CD4-positive, alpha-beta memory T cell (primary cell): ENCODE measurements at regions of chr2 and their contacts with region 1.

Region 1: DNA sequence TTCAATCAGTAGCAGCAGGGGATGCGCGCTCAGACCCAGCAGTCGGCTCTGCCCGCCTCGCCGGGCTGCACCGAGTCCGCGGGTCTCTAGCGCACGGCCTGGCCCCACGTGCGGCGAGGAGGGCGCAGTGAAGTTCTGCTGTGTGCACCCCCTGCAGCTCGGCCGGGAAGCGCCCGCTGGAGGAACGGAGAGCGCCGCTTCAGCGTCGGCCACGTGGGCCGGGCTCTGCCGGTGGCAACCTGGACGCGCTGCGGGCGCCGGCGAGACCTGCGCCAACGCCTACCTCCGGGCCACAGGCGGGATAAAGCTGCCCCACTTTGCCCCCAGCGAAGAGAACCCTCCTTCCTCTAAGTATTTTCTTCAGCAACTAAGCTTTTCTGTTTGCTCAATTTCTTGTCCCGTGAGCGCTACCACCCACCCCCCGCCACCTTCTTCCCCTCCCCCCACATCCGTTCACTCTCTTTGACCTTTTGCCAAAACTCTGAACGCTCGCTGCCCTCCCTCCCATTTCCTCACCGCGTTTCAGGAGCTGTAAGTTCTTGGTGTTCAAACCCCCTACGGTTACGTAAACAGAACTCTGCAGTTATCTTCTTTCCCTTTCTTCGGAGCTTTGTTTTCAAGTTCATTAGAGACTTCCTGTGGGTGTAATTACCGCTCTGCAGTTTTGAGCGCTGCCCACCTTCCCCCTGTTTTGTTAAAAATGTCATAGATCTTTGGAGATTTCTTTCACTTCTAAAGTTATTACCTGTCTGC is 42.6 kb upstream of the EDAR start:
- DNase-seq: peak; percentile 86 to 92 (median 92)
- H3K4me3 ChIP-seq: peak overlapping the region; percentile 14 to 61
- H3K4me3 Mint-ChIP-seq: peak overlapping the region; percentile 74 to 87 (median 86)
- H3K27ac ChIP-seq: peak overlapping the region; percentile 49
- H3K27ac Mint-ChIP-seq: peak overlapping the region; percentile 85 to 95 (median 93)
- H3K4me1 ChIP-seq: peaks cover 71% of the 10 kb centered on the region
- H3K4me1 Mint-ChIP-seq: peaks cover 37 to 81% (median 60%) of the 10 kb centered on the region in 4 donors
- H3K27me3 ChIP-seq: no peaks in the 10 kb centered on the region
- H3K27me3 Mint-ChIP-seq: no peaks in the 10 kb centered on the region

Region 2: GRCh38 chr2:108448678-108449493 is 582.8 kb before region 1 on chr2 and contains the start of gene GCC2:
- CTCF ChIA-PET with region 1: no interaction called
- POLR2A ChIA-PET with region 1: no interaction called
- intact Hi-C with region 1: loop called (anchors 5 kb)
- DNase-seq: peak; percentile 96 to 97 (median 96)
- H3K4me3 ChIP-seq: peak within 1 kb of the TSS; percentile 83 to 100
- H3K4me3 Mint-ChIP-seq: peak within 1 kb of the TSS; percentile 95 to 100 (median 98)
- H3K27ac ChIP-seq: peak within 1 kb of the TSS; percentile 97
- H3K27ac Mint-ChIP-seq: peak within 1 kb of the TSS; percentile 98 to 100 (median 99)
- H3K4me1 ChIP-seq: peaks cover 32% of the 10 kb centered on the region
- H3K4me1 Mint-ChIP-seq: peaks cover 20 to 50% (median 34%) of the 10 kb centered on the region in 4 donors
- H3K27me3 ChIP-seq: no peaks in the 10 kb centered on the region
- H3K27me3 Mint-ChIP-seq: no peaks in the 10 kb centered on the region
- total RNA-seq, gene GCC2: 209 to 232 TPM

Region 3: GRCh38 chr2:108565778-108566375 is 465.8 kb before region 1 on chr2:
- CTCF ChIA-PET with region 1: no interaction called
- POLR2A ChIA-PET with region 1: no interaction called
- intact Hi-C with region 1: no loop called
- DNase-seq: no peak
- H3K4me3 ChIP-seq: no peak overlapping the region
- H3K4me3 Mint-ChIP-seq: peak overlapping the region; percentile 17 to 71 (median 52)
- H3K27ac ChIP-seq: peak overlapping the region; percentile 5
- H3K27ac Mint-ChIP-seq: peak overlapping the region in 6 of 7 donors; percentile 61 to 92 (median 76)
- H3K4me1 ChIP-seq: no peaks in the 10 kb centered on the region
- H3K4me1 Mint-ChIP-seq: peaks cover 7 to 18% (median 9%) of the 10 kb centered on the region in 4 donors
- H3K27me3 ChIP-seq: no peaks in the 10 kb centered on the region
- H3K27me3 Mint-ChIP-seq: no peaks in the 10 kb centered on the region

Region 4: GRCh38 chr2:108855194-108855593 is 176.5 kb before region 1 on chr2:
- CTCF ChIA-PET with region 1: interaction called, 3 read pairs
- POLR2A ChIA-PET with region 1: no interaction called
- intact Hi-C with region 1: loop called (anchors 5 kb)
- DNase-seq: peak in 4 of 5 donors; percentile 26 to 38 (median 34)
- H3K4me3 ChIP-seq: no peak overlapping the region
- H3K4me3 Mint-ChIP-seq: no peak overlapping the region
- H3K27ac ChIP-seq: no peak overlapping the region
- H3K27ac Mint-ChIP-seq: peak overlapping the region in 1 of 7 donors; percentile 13
- H3K4me1 ChIP-seq: no peaks in the 10 kb centered on the region
- H3K4me1 Mint-ChIP-seq: peaks cover 0 to 2% (median 0%) of the 10 kb centered on the region in 4 donors
- H3K27me3 ChIP-seq: no peaks in the 10 kb centered on the region
- H3K27me3 Mint-ChIP-seq: no peaks in the 10 kb centered on the region

Region 5: GRCh38 chr2:108988796-108989713 is 42.6 kb before region 1 on chr2 and contains the start of gene EDAR:
- CTCF ChIA-PET with region 1: interaction called, 5 read pairs
- POLR2A ChIA-PET with region 1: interaction called, 25 read pairs
- intact Hi-C with region 1: loop called (anchors 1 kb)
- DNase-seq: peak in 4 of 5 donors; percentile 42 to 55 (median 48)
- H3K4me3 ChIP-seq: peak within 1 kb of the TSS; percentile 19 to 26
- H3K4me3 Mint-ChIP-seq: peak within 1 kb of the TSS; percentile 85 to 95 (median 88)
- H3K27ac ChIP-seq: no peak within 1 kb of the TSS
- H3K27ac Mint-ChIP-seq: peak within 1 kb of the TSS; percentile 16 to 90 (median 77)
- H3K4me1 ChIP-seq: peaks cover 29% of the 10 kb centered on the region
- H3K4me1 Mint-ChIP-seq: peaks cover 21 to 43% (median 33%) of the 10 kb centered on the region in 4 donors
- H3K27me3 ChIP-seq: no peaks in the 10 kb centered on the region
- H3K27me3 Mint-ChIP-seq: peaks cover 0 to 7% of the 10 kb centered on the region in 2 donors
- total RNA-seq, gene EDAR: 5.8 to 6.3 TPM

Region 6: GRCh38 chr2:109046925-109047508 is 15.4 kb after region 1 on chr2:
- CTCF ChIA-PET with region 1: interaction called, 3 read pairs
- POLR2A ChIA-PET with region 1: interaction called, 6 read pairs
- intact Hi-C with region 1: loop called (anchors 2 kb)
- DNase-seq: no peak
- H3K4me3 ChIP-seq: no peak overlapping the region
- H3K4me3 Mint-ChIP-seq: no peak overlapping the region
- H3K27ac ChIP-seq: no peak overlapping the region
- H3K27ac Mint-ChIP-seq: peak overlapping the region in 3 of 7 donors; percentile 25 to 78 (median 55)
- H3K4me1 ChIP-seq: no peaks in the 10 kb centered on the region
- H3K4me1 Mint-ChIP-seq: peaks cover 3 to 13% (median 7%) of the 10 kb centered on the region in 4 donors
- H3K27me3 ChIP-seq: no peaks in the 10 kb centered on the region
- H3K27me3 Mint-ChIP-seq: no peaks in the 10 kb centered on the region

Region 7: GRCh38 chr2:109102588-109103233 is 71.1 kb after region 1 on chr2:
- CTCF ChIA-PET with region 1: interaction called, 3 read pairs
- POLR2A ChIA-PET with region 1: interaction called, 8 read pairs
- intact Hi-C with region 1: loop called (anchors 5 kb)
- DNase-seq: peak in 2 of 5 donors; percentile 10 to 12
- H3K4me3 ChIP-seq: no peak overlapping the region
- H3K4me3 Mint-ChIP-seq: peak overlapping the region in 4 of 8 donors; percentile 1 to 66 (median 7)
- H3K27ac ChIP-seq: no peak overlapping the region
- H3K27ac Mint-ChIP-seq: no peak overlapping the region
- H3K4me1 ChIP-seq: peaks cover 9% of the 10 kb centered on the region
- H3K4me1 Mint-ChIP-seq: peaks cover 10 to 18% (median 12%) of the 10 kb centered on the region in 4 donors
- H3K27me3 ChIP-seq: no peaks in the 10 kb centered on the region
- H3K27me3 Mint-ChIP-seq: peaks cover 1 to 4% of the 10 kb centered on the region in 2 donors

Region 8: DNA sequence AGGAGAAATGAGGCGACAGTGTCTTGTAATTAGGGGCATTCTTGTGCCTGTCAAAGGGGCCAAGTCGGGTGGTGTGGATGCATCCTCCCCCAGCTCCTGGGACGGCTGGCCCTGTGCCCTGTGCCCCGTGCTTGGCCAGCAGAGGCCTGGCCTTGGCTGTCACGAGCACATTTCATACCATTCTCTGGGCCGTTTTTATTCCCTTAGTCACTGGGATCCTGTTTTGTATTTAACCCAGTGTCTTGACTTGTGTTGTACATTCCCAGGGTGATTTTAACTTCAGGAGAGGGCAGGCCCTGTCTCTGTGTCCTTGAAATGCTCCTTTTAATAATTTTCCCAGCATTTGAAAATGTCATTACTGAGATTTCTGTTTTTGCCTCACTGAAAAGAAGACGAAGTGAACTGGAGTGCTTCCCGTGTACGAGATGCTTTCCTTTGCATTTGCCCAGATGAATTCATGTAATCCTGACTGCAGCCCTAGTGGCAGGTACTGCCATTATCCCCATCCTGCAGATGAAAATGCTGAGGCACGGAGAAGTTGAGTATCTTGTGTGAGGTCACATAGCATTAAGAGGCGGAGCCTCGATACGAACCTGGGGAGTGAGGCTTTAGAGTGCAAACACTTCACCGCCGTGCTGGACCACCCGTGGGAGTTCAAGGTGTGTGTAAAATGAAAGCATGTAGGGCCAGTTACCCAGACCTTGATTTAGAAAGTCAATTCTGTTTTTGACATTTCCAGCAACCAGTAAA is 154.3 kb after region 1 on chr2:
- CTCF ChIA-PET with region 1: no interaction called
- POLR2A ChIA-PET with region 1: no interaction called
- intact Hi-C with region 1: no loop called
- DNase-seq: no peak
- H3K4me3 ChIP-seq: no peak overlapping the region
- H3K4me3 Mint-ChIP-seq: no peak overlapping the region
- H3K27ac ChIP-seq: no peak overlapping the region
- H3K27ac Mint-ChIP-seq: no peak overlapping the region
- H3K4me1 ChIP-seq: no peaks in the 10 kb centered on the region
- H3K4me1 Mint-ChIP-seq: no peaks in the 10 kb centered on the region
- H3K27me3 ChIP-seq: peaks cover under 1% of the 10 kb centered on the region
- H3K27me3 Mint-ChIP-seq: peaks cover 10 to 13% of the 10 kb centered on the region in 2 donors

Region 9: DNA sequence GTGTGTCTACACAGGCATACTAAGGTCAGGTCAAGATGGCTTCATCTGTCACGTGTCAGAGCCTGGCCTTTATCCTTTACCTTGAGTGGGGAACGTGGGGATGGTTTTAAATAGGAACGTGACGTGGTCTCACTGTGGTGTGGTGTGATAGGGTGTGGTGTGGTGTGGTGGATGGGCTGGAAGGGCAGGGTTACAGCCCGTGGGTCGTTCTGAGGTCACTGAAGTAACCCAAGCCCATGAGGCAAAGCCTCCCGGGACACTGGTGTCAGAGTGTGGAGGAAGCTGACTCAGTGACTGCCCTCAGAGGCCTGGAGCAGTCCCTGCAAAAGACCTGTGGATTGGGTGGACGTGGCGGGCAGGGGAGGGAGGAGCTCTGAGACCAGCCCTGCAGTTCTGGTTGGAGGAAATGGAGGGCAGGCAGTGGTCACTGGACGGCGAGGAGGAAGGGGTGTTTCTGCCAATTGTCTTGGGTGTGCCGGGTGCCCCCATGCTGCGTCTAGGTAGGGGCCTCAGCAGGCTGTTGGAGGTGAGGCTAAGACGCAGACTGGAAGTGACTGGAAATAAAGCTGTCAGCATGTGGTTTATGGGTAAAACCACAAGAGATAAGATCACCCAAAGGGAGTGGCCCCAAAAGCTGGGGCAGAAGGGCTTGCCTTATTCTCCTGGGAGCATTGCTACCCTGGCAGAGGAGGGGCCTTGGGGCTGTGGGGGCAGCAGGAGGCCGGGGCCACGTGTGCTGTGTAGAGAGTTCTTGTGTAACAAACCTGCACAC is 182.2 kb after region 1 on chr2:
- CTCF ChIA-PET with region 1: no interaction called
- POLR2A ChIA-PET with region 1: interaction called, 5 read pairs
- intact Hi-C with region 1: loop called (anchors 5 kb)
- DNase-seq: peak; percentile 83 to 89 (median 85)
- H3K4me3 ChIP-seq: peak overlapping the region in 1 of 2 donors; percentile 9
- H3K4me3 Mint-ChIP-seq: peak overlapping the region; percentile 23 to 80 (median 68)
- H3K27ac ChIP-seq: no peak overlapping the region
- H3K27ac Mint-ChIP-seq: peak overlapping the region; percentile 71 to 91 (median 81)
- H3K4me1 ChIP-seq: peaks cover 59% of the 10 kb centered on the region
- H3K4me1 Mint-ChIP-seq: peaks cover 49 to 75% (median 59%) of the 10 kb centered on the region in 4 donors
- H3K27me3 ChIP-seq: peaks cover 39% of the 10 kb centered on the region
- H3K27me3 Mint-ChIP-seq: peaks cover 61 to 80% of the 10 kb centered on the region in 2 donors